ENCODE measurements at regions of chr17 and their contacts with region 1.

Region 1: GRCh38 chr17:79627184-79627765 is 16.4 kb upstream of the RBFOX3 start:
- DNase-seq: peak; percentile 31
- ATAC-seq: no peak

Region 2: DNA sequence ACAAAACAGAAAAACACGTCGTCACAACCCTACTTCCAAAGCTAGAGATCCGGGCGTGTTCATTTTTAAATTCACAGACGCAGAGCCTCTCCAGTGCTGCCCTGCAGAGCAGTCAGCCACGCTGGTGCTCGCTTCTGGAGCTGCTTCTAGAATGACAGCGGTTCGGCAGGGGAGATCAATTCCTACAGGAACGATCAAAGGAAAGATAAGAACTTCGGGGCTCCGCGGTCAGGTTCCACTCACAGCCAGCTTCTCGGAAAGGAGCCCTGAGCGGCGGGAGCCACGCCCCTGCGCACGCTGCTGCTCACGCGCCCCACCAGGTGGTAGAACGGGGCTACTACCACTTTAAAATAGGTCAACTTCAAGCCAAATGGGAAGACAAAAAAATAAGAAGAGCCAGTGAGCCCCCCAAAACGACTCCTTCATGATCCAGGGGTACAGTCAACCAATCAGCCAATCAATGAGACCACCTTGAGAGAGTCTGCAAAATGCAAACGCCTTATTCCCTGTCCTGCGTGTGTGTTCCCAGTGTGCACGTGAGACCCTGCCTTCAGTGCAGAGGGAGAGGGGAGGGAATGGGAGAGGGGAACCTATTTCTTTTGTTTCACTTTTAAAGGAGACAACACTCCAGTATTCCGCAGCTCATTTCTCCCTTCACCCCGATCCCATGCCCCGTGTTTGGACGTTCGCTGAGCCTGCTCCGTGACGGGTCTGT is 226.1 kb before region 1 on chr17:
- intact Hi-C with region 1: loop called (anchors 1 kb)
- DNase-seq: peak; percentile 84
- ATAC-seq: peak; percentile 89

Measured in sciatic nerve (tissue), 2 donors.